CD8-positive, alpha-beta memory T cell (primary cell): ENCODE measurements at regions of chr1 and their contacts with region 1.

Region 1: DNA sequence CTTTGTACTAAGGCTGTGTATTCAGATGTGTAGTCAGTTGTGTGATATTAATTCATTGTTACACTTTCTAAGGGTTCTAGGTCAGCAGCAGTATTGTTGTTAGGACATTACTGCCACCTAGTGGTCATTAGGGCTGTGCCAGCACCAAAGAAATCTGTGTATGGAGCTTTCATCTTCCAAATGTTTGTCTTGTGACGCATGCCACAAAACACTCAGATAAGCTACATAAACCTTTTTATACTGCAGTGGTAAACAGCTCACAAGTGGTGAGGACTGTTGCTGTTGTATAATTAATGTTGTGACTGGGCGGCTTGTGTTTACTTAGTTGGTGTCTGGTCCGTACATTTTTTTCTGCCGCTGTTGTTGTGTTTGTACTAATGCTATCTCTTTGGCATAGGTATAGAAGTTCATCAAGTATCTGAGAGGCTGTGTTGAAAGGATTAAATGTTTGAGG is 51.7 kb downstream of the S1PR1 start:
- DNase-seq: peak; percentile 32 to 75 (median 69)
- H3K4me3 ChIP-seq: peak overlapping the region; percentile 10
- H3K4me3 Mint-ChIP-seq: peak overlapping the region in 3 of 7 donors; percentile 10 to 49 (median 21)
- H3K27ac ChIP-seq: no peak overlapping the region
- H3K27ac Mint-ChIP-seq: peak overlapping the region in 7 of 8 donors; percentile 4 to 87 (median 78)
- H3K4me1 ChIP-seq: peaks cover 76% of the 10 kb centered on the region
- H3K4me1 Mint-ChIP-seq: peaks cover 67 to 83% (median 82%) of the 10 kb centered on the region in 3 donors
- H3K27me3 ChIP-seq: no peaks in the 10 kb centered on the region
- H3K27me3 Mint-ChIP-seq: no peaks in the 10 kb centered on the region

Region 2: GRCh38 chr1:100921109-100921706 is 367.3 kb before region 1 on chr1:
- CTCF ChIA-PET with region 1: interaction called, 68 read pairs
- POLR2A ChIA-PET with region 1: no interaction called
- DNase-seq: peak in 2 of 5 donors; percentile 40 to 56
- H3K4me3 ChIP-seq: no peak overlapping the region
- H3K4me3 Mint-ChIP-seq: peak overlapping the region in 1 of 7 donors; percentile 32
- H3K27ac ChIP-seq: no peak overlapping the region
- H3K27ac Mint-ChIP-seq: peak overlapping the region; percentile 9 to 84 (median 64)
- H3K4me1 ChIP-seq: peaks cover 40% of the 10 kb centered on the region
- H3K4me1 Mint-ChIP-seq: peaks cover 16 to 40% (median 35%) of the 10 kb centered on the region in 3 donors
- H3K27me3 ChIP-seq: no peaks in the 10 kb centered on the region
- H3K27me3 Mint-ChIP-seq: no peaks in the 10 kb centered on the region

Region 3: DNA sequence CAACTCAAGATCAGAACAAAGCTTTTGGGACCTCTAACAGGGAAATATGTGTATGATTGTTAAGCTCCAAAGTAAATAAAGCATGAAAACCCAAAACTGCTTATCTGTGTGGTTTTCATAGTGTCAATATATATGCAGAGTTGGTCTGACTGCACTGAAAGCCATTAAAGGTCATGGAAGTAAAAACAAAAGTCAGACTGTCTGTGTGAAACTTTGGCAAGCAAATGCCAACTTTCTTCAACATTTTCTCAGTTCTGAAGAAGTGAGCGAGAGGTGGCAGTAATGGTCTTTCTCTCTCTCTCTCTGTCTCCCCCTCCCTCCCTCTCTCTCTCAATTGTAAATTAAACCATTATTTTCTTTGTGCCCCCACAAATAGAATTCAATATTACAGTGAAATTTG is 151.8 kb before region 1 on chr1:
- CTCF ChIA-PET with region 1: interaction called, 36 read pairs
- POLR2A ChIA-PET with region 1: no interaction called
- DNase-seq: peak in 2 of 5 donors; percentile 38 to 51
- H3K4me3 ChIP-seq: no peak overlapping the region
- H3K4me3 Mint-ChIP-seq: peak overlapping the region in 6 of 7 donors; percentile 51 to 78 (median 62)
- H3K27ac ChIP-seq: no peak overlapping the region
- H3K27ac Mint-ChIP-seq: peak overlapping the region; percentile 71 to 97 (median 90)
- H3K4me1 ChIP-seq: peaks cover 40% of the 10 kb centered on the region
- H3K4me1 Mint-ChIP-seq: peaks cover 40 to 61% (median 55%) of the 10 kb centered on the region in 3 donors
- H3K27me3 ChIP-seq: no peaks in the 10 kb centered on the region
- H3K27me3 Mint-ChIP-seq: no peaks in the 10 kb centered on the region

Region 4: DNA sequence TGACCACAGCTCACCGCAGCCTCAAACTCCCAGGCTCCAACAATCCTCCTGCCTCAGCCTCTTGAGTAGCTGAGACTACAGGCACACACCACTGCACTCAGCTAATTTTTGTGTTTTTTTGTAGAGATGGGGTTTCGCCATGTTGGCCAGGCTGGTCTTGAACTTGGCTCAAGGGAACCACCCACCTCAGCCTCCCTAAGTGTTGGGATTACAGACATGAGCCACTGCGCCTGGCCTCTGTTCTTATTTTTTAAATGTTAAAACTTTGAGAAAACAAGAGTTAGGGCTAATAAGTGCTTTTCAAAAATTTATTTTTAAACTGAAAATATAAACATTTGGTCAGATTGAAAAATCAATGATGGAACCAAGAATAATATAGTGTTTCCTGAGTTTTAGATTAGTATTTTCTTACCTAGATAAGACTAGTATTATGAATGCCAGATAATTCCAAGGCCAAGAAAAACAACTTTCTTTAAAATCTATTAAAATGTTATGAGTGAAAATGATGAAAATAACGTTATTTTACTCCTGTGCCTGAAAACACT is 117.9 kb before region 1 on chr1:
- CTCF ChIA-PET with region 1: no interaction called
- POLR2A ChIA-PET with region 1: no interaction called
- DNase-seq: no peak
- H3K4me3 ChIP-seq: no peak overlapping the region
- H3K4me3 Mint-ChIP-seq: no peak overlapping the region
- H3K27ac ChIP-seq: no peak overlapping the region
- H3K27ac Mint-ChIP-seq: no peak overlapping the region
- H3K4me1 ChIP-seq: no peaks in the 10 kb centered on the region
- H3K4me1 Mint-ChIP-seq: peaks cover 0 to 2% (median 0%) of the 10 kb centered on the region in 3 donors
- H3K27me3 ChIP-seq: no peaks in the 10 kb centered on the region
- H3K27me3 Mint-ChIP-seq: no peaks in the 10 kb centered on the region

Region 5: DNA sequence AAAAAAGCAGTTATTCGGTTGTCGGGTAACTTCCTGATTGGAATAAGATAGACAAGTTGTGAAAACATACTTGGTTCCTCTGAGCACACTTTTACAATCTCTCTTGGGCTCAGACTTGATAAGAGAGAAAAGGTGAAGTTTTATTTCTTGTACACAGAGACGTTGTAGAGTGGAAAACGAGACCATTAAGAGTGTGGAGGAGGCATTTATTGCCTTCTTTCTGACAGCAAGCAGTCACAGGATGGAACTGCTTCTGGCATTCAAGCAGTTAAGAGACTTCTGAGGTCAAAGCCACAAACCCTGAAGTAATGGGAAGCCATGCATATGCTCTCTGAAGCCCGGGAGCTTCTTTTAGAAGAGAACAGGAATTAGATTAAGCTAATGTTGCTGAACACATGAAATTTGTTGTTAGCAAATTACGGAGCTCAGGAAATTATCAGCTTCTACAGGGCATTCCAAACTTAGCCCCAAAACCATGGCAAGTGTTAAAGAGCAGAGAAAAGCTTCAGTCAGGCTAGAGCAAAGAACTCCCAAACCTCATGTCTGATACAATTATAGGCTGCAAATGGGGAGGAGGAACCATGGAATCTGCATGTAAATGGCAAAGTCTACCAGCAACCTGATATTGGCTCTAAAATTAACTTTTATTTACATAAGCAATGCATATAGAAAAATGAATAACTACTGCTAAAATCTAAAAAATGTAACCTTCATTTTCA is 25.7 kb before region 1 on chr1:
- CTCF ChIA-PET with region 1: interaction called, 32 read pairs
- POLR2A ChIA-PET with region 1: interaction called, 4 read pairs
- DNase-seq: peak in 2 of 5 donors; percentile 50 to 60
- H3K4me3 ChIP-seq: peak overlapping the region; percentile 37
- H3K4me3 Mint-ChIP-seq: peak overlapping the region; percentile 36 to 84 (median 74)
- H3K27ac ChIP-seq: no peak overlapping the region
- H3K27ac Mint-ChIP-seq: peak overlapping the region; percentile 82 to 95 (median 90)
- H3K4me1 ChIP-seq: peaks cover 99% of the 10 kb centered on the region
- H3K4me1 Mint-ChIP-seq: peaks cover 85 to 95% (median 90%) of the 10 kb centered on the region in 3 donors
- H3K27me3 ChIP-seq: no peaks in the 10 kb centered on the region
- H3K27me3 Mint-ChIP-seq: no peaks in the 10 kb centered on the region

Region 6: GRCh38 chr1:101309334-101310311 is 21.1 kb after region 1 on chr1:
- CTCF ChIA-PET with region 1: interaction called, 48 read pairs
- POLR2A ChIA-PET with region 1: interaction called, 4 read pairs
- DNase-seq: peak; percentile 60 to 91 (median 87)
- H3K4me3 ChIP-seq: peak overlapping the region; percentile 56
- H3K4me3 Mint-ChIP-seq: peak overlapping the region; percentile 48 to 89 (median 82)
- H3K27ac ChIP-seq: peak overlapping the region; percentile 63
- H3K27ac Mint-ChIP-seq: peak overlapping the region; percentile 87 to 99 (median 98)
- H3K4me1 ChIP-seq: peaks cover 62% of the 10 kb centered on the region
- H3K4me1 Mint-ChIP-seq: peaks cover 73 to 80% (median 79%) of the 10 kb centered on the region in 3 donors
- H3K27me3 ChIP-seq: no peaks in the 10 kb centered on the region
- H3K27me3 Mint-ChIP-seq: no peaks in the 10 kb centered on the region